Common myeloid progenitor, CD34-positive (primary cell): ENCODE measurements at regions of chr1 and their contacts with region 1.

Region 1: DNA sequence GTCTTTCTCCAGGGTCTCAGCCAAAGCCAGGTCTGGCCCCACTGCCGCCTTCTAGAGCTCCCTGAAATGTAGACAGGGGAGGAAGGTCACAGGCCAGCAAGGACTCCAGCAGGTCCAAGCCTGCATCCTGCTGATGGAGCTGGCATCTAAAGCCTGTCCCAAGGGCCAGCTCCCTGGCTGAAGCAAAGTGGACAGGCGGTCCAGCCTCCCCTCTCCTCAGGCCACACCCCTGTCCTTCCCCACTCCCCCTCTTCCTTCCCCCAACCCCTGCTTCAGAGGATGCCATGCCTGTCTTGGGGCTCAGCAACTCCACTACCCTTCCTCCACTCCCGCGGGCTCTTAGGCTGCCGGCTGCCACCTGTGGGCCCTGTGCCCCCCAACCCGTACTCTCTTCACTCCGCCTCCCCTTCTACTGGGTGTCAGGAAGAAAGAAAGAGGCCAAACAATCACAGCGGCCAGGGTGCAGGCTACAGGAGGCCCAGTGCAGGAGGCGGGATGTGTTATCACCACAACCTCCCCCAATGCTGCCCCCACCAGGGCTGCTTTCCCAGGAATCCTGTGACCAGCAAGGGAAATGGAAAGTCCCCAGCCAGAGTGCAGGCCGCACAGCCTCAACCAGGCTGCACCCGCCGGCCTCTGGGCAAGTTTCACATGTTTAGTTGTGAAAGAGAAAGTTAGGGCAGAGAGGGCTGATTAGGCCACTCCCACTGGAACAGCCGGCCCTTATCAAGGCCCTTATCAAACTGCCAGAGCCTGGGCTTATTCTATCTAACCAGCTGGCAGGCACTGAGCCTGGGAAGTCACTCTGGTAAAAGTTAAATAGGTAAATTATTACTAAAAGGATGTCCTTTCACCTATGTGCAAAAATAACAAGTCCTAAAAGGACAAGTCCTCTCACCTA is 34.1 kb downstream of the ACOT7 start:
- DNase-seq: peak; percentile 65 to 77 (median 76)
- H3K4me3 ChIP-seq: peak overlapping the region in 3 of 7 experiments; percentile 32 to 64 (median 61)
- H3K27ac ChIP-seq: peak overlapping the region; percentile 70 to 85
- H3K4me1 ChIP-seq: peaks cover 0 to 42% (median 36%) of the 10 kb centered on the region in 4 experiments
- H3K27me3 ChIP-seq: no peaks in the 10 kb centered on the region

Region 2: DNA sequence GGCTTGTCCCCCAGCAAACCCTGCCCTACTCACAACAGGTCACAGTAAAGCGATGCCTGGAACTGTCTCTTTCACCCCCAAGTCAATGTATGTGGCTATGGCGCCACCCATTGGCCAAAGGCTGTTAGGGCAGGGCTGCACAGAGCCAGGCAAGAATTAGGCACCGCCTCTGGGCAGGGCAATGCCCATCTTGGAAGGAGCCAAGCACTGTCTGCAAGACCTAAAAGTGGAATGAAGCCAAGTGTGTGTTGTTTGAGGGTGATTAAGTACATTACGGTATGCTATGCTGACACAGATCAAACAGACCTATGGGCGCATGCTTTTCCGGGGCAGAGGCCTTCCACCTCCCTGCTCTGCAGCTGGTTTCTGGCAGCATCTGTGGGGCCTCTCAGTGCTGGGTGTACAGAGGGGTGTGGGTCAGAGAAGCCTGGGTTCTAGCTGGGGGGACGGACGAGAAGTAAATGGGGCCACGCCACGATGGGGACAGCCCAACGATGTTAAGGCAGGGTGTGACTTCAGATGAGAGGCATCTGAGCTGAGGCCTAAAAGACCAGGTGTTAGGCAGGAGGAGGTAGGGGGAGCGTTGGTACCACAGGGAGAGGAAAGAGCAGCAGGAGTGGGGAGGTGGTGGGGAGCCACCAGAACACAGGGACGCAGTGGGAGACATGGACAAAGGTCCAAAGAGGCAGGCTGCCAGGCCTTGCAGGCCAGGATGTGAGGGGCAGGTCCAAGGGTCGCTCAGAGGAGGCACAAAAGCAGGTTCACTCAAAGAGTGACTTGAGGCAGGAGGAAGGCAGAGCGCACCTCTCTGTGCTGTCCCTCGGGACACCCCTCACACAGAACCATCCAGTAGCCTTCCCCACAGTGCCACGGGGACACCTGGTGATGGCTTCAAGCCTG is 15.7 kb before region 1 on chr1:
- CTCF ChIA-PET with region 1: interaction called, 60 read pairs
- POLR2A ChIA-PET with region 1: interaction called, 6 read pairs
- DNase-seq: peak; percentile 59 to 80 (median 75)
- H3K4me3 ChIP-seq: no peak overlapping the region
- H3K27ac ChIP-seq: no peak overlapping the region
- H3K4me1 ChIP-seq: peaks cover 0 to 11% (median 9%) of the 10 kb centered on the region in 4 experiments
- H3K27me3 ChIP-seq: no peaks in the 10 kb centered on the region

Region 3: DNA sequence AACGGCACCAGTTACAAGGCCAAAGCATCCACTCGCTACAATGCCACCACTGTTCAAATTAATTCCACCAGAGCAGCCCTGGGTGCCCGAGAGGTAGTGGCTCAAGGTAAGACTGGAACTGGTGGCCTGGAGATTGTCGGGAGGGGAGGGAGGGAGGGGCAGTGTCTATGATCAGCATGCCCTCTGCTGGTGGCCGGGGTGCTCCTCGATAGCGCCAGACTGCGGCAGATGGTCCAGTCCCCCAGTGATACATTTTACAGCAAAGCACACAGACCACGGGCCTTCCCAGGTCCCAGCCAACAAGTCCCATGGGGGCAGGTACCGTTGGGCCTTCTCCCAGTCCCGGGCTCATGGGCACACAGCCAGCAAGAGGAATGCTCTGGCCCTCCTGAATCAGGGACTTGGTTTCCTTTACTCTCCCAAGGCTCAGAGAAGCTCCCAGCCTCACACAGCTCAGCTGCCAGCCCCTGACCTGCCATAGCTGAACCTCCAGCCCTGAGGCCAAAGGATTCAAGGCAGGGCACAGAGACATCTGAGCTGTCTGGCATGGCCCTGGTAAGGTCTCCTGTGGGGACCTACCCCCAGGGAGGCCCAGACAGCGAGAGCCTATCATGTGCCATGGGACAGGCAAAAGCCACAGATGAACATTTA is 18.8 kb after region 1 on chr1:
- CTCF ChIA-PET with region 1: interaction called, 34 read pairs
- POLR2A ChIA-PET with region 1: no interaction called
- DNase-seq: peak in 1 of 3 donors; percentile 30
- H3K4me3 ChIP-seq: no peak overlapping the region
- H3K27ac ChIP-seq: no peak overlapping the region
- H3K4me1 ChIP-seq: no peaks in the 10 kb centered on the region
- H3K27me3 ChIP-seq: no peaks in the 10 kb centered on the region

Region 4: DNA sequence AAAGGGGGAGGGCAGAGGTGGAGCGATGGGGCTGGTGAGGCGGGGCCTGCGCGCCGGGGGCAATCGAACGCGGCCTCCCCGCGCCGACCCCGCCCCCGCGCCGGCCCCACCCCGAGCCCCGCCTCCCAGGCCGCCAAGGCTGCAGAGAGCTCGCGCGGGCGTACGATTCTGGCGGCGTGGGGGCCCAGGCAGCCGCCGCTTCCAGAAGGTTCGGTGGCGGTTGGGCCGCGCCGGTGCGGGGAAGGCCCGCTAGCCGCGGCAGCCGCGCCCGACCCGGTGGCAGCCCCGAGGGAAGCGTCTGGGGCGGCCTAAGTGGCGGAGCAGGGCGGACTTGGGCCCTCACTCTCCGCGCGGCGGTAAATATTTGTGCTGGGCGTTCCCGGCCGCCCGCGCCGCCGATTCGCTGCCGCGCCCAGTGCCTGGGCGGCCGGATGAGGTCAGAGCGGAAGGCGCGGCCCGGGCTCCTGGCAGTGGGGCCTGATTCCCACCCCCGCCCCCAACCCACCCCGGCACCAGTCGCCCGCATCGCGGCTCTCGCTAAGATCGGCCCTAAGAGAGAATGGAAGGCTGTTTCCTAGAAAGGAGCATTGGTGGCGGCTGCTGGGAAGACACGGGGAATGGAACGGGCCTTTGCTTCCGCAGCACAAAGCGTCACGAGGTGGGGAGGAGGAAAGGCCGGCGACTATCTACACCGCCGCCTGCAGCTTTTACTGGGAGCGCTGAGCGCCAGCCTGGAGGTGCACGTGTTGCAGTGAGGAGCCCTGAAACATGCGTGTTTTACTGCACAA is 34.1 kb after region 1 on chr1 and contains the start of gene ACOT7:
- CTCF ChIA-PET with region 1: interaction called, 10 read pairs
- POLR2A ChIA-PET with region 1: interaction called, 5 read pairs
- DNase-seq: peak; percentile 80 to 92 (median 89)
- H3K4me3 ChIP-seq: peak within 1 kb of the TSS; percentile 52 to 80 (median 66)
- H3K27ac ChIP-seq: peak within 1 kb of the TSS; percentile 54 to 82
- H3K4me1 ChIP-seq: peaks cover 4 to 25% (median 22%) of the 10 kb centered on the region in 4 experiments
- H3K27me3 ChIP-seq: no peaks in the 10 kb centered on the region

Region 5: DNA sequence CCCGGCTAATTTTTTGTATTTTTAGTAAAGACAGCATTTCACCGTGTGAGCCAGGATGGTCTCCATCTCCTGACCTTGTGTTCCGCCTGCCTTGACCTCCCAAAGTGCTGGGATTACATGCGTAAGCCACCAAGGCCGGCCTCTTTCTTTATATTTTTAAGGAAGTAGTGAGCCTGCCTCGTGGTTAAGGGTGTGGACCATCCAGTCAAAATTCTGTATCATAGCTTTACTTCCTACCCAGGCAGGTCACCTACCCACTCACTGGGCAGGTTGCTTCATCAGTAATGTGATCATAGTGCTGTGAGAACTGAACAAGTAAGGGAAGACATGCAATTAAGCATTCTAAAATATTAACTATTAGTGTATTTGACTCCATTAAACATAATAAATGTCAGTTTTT is 42.2 kb after region 1 on chr1:
- CTCF ChIA-PET with region 1: interaction called, 58 read pairs
- POLR2A ChIA-PET with region 1: no interaction called
- DNase-seq: peak in 2 of 3 donors; percentile 51 to 59
- H3K4me3 ChIP-seq: no peak overlapping the region
- H3K27ac ChIP-seq: no peak overlapping the region
- H3K4me1 ChIP-seq: no peaks in the 10 kb centered on the region
- H3K27me3 ChIP-seq: peaks cover 0 to 9% (median 3%) of the 10 kb centered on the region in 5 experiments

Region 6: GRCh38 chr1:6423321-6423999 is 64.0 kb after region 1 on chr1:
- CTCF ChIA-PET with region 1: interaction called, 10 read pairs
- POLR2A ChIA-PET with region 1: no interaction called
- DNase-seq: peak; percentile 40 to 59 (median 58)
- H3K4me3 ChIP-seq: peak overlapping the region in 2 of 7 experiments; percentile 42 to 53
- H3K27ac ChIP-seq: no peak overlapping the region
- H3K4me1 ChIP-seq: peaks cover 0 to 38% (median 29%) of the 10 kb centered on the region in 4 experiments
- H3K27me3 ChIP-seq: peaks cover 0 to 97% (median 33%) of the 10 kb centered on the region in 5 experiments